GM10248 (cell line): ENCODE measurements at regions of chr3 and their contacts with region 1.

Region 1: DNA sequence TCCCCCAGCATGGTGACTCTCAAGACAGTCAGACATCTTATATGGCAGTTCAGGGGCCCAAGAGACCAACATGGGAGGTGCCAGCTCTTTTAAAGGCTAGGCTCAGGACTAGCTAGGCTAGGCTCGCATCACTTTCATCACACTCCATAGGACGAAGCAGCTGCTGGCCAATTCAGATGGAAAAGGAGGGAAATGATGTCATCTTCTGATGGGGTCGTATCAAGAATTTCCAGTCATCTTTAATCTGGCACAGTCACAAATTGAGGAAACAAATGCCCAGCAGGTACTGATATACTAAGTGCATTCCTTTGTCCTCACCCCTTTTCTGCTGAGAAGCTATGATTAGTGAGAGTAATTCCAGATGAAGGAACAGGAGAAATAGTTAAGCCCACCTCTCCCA is 360.9 kb downstream of the CNTN3 start:
- DNase-seq: no peak
- CTCF ChIP-seq: no peak

Region 2: DNA sequence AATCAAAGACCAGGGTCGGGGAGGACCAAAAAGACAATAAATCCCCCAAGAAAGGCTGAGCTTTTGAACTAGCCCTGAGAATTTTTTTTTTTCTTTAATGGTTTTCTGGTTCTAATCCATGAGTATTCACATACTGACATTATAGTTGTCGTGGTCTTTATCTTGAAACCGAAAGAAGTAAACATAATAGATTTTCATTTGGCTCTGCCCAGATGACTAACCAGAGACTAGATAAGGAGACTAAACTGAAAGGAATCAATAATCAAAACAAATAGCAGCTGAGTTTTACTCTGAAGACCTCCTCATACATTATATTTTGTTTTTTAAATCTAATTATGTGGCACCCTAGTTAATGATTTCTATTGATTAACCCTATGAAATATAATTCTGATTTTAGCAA is 20.5 kb before region 1 on chr3:
- CTCF ChIA-PET with region 1: no interaction called
- POLR2A ChIA-PET with region 1: no interaction called
- DNase-seq: no peak
- CTCF ChIP-seq: no peak

Region 3: GRCh38 chr3:74267588-74268184 is 14.1 kb after region 1 on chr3:
- CTCF ChIA-PET with region 1: interaction called, 12 read pairs
- POLR2A ChIA-PET with region 1: interaction called, 8 read pairs
- DNase-seq: peak; percentile 7
- CTCF ChIP-seq: peak; percentile 40